ENCODE measurements at regions of chr20 and their contacts with region 1.

Region 1: DNA sequence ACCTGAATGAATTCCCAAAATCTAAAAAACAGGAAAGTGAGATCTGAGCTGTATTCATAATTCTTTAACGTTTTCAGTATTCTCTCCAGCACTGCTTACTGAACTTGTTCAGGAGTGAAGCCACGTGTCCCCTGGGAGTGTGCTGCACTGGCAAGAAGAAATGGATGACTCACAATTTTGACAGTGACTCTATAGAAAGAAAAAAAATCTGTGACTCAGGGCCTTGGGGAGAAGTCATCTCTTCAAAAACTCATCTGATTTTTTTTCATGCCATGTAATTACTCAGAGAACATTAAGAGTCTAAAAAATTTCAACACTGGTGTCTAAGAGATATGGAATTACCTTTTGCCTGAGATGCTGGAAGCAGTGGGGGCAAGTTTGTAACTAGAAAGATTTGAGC is 39.7 kb downstream of the ANKEF1 start:
- DNase-seq: peak; percentile 89
- H3K4me3 Mint-ChIP-seq: peak overlapping the region; percentile 33
- H3K27ac Mint-ChIP-seq: peak overlapping the region; percentile 20
- H3K4me1 Mint-ChIP-seq: peaks cover 39% of the 10 kb centered on the region
- H3K27me3 Mint-ChIP-seq: no peaks in the 10 kb centered on the region
- CTCF ChIP-seq: no peak

Region 2: DNA sequence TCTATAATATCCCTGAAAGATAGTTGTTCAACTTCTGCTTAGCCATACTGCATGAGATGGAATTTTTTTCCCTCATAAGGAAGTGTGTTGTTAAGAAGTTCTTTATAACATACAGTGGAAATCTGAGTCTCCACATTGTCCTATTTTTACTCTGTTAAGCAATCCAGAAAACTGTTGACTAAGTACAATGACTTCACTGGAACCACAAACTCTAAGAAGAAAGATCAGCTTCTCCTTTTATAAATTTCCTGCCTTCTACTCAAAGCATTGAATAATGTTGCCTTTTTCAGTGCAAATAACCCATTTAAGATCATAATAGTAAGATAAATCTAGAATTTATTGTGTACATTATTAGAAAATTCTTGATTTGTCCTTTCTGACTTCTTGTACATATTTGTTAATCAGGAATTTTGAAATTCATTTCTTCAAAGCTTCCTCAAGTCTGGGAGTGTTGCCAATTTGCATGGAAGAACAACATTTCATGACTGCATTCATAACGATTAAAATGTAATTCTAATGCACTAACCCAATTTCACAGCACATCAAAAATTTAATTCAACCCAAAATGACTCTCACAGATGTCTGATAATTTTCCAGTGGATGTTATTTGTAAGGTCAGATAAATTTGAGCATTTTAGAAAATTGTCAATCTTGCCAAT is 85.3 kb before region 1 on chr20:
- CTCF ChIA-PET with region 1: interaction called, 20 read pairs
- POLR2A ChIA-PET with region 1: interaction called, 16 read pairs
- intact Hi-C with region 1: no loop called
- DNase-seq: peak; percentile 82
- H3K4me3 Mint-ChIP-seq: peak overlapping the region; percentile 26
- H3K27ac Mint-ChIP-seq: peak overlapping the region; percentile 82
- H3K4me1 Mint-ChIP-seq: peaks cover 26% of the 10 kb centered on the region
- H3K27me3 Mint-ChIP-seq: no peaks in the 10 kb centered on the region
- CTCF ChIP-seq: no peak

Region 3: GRCh38 chr20:10034717-10035571 is 39.6 kb before region 1 on chr20 and contains the start of gene ANKEF1:
- CTCF ChIA-PET with region 1: interaction called, 9 read pairs
- POLR2A ChIA-PET with region 1: interaction called, 30 read pairs
- intact Hi-C with region 1: loop called (anchors 2 kb)
- DNase-seq: peak; percentile 72
- H3K4me3 Mint-ChIP-seq: peak within 1 kb of the TSS; percentile 73
- H3K27ac Mint-ChIP-seq: peak within 1 kb of the TSS; percentile 57
- H3K4me1 Mint-ChIP-seq: peaks cover 1% of the 10 kb centered on the region
- H3K27me3 Mint-ChIP-seq: no peaks in the 10 kb centered on the region
- CTCF ChIP-seq: no peak
- total RNA-seq, gene ANKEF1: 5.6 and 7.2 TPM in 2 replicates

Region 4: DNA sequence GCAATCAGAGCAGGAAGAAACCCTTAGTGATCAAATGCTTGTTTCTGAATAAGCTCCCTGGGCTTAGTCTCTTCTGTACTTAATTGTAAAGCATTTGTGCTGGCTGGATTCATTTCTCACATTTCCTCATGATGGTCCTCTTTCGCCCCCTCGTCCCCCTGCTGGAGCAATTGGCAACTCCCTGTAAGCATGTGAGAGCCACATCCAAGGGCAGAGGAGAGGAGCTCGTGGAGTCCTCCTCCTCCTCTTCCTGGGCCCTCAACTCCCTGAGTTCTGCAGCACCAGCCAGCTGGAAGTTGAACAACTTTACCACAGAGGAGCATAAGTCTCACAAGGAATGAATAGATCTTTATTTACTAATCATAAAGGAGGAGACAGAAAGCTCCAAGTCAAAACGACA is 27.1 kb before region 1 on chr20:
- CTCF ChIA-PET with region 1: interaction called, 5 read pairs
- POLR2A ChIA-PET with region 1: interaction called, 10 read pairs
- intact Hi-C with region 1: no loop called
- DNase-seq: peak; percentile 18
- H3K4me3 Mint-ChIP-seq: no peak overlapping the region
- H3K27ac Mint-ChIP-seq: no peak overlapping the region
- H3K4me1 Mint-ChIP-seq: no peaks in the 10 kb centered on the region
- H3K27me3 Mint-ChIP-seq: no peaks in the 10 kb centered on the region
- CTCF ChIP-seq: no peak

Region 5: DNA sequence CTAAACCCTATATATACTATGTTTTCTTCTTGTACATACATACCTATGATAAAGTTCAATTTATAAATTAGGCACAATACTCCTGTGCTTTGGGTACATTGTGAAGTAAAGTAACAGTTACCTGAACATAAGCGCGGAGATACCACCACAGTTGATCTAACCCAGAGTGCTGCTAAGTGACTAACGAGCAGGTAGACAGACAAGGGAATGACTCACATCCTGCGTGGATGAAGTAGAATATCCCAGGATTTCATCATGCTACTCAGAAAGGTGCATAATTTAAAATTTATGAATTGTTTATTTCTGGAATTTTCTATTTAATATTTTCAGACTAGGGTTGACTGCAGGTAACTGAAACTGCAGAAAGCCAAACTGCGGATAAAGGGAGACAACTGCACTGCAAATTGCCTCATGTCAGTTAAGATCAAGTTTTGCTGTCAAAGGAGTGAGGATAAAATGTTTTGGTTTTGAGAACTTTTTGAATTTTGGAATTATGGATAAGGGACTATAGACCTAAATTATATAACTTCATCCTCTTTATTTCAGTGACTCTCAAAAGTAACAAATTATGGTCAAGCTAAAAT is 345.1 kb after region 1 on chr20:
- CTCF ChIA-PET with region 1: interaction called, 3 read pairs
- POLR2A ChIA-PET with region 1: no interaction called
- intact Hi-C with region 1: loop called (anchors 5 kb)
- DNase-seq: peak; percentile 84
- H3K4me3 Mint-ChIP-seq: peak overlapping the region; percentile 63
- H3K27ac Mint-ChIP-seq: peak overlapping the region; percentile 84
- H3K4me1 Mint-ChIP-seq: peaks cover 33% of the 10 kb centered on the region
- H3K27me3 Mint-ChIP-seq: no peaks in the 10 kb centered on the region
- CTCF ChIP-seq: no peak